Calu3 (cell line): ENCODE measurements at regions of chr5 and their contacts with region 1.

Region 1: DNA sequence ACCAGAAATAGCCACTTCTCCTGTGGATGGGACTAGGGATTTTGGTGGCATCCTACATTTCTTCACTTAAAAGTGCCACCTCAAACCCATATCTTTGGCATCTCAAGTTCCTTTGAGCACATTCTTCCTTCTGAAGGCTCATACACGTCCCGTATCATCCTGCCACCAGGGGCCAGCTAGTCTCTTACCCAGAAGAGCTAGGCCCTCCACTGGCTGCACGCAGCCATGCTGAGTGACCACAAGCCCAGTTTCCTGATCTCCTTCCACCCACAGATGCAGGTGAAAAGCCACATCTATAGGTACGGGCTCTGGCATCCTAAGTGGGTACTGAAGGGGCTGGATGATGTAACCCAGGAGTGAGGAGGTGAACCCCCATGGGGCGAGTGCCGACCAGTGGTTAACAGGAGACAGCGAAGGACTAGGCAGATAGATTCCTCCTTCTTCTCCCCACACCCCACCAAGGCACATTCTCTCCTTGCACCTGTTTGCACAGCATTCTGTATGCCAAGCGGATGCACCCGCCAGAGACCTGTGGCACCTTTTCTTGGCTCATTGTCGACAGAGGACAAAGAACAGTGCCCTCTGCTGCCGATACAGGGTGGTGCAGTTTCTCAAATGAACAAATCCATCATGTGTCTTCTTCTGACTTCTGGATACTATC is 14.4 kb upstream of the SCGB3A1 start:
- DNase-seq: peak; percentile 73
- H3K4me3 Mint-ChIP-seq: no peak overlapping the region
- H3K27ac Mint-ChIP-seq: no peak overlapping the region
- H3K4me1 Mint-ChIP-seq: peaks cover 7% of the 10 kb centered on the region
- H3K27me3 Mint-ChIP-seq: peaks cover 47% of the 10 kb centered on the region
- CTCF ChIP-seq: peak; percentile 84

Region 2: DNA sequence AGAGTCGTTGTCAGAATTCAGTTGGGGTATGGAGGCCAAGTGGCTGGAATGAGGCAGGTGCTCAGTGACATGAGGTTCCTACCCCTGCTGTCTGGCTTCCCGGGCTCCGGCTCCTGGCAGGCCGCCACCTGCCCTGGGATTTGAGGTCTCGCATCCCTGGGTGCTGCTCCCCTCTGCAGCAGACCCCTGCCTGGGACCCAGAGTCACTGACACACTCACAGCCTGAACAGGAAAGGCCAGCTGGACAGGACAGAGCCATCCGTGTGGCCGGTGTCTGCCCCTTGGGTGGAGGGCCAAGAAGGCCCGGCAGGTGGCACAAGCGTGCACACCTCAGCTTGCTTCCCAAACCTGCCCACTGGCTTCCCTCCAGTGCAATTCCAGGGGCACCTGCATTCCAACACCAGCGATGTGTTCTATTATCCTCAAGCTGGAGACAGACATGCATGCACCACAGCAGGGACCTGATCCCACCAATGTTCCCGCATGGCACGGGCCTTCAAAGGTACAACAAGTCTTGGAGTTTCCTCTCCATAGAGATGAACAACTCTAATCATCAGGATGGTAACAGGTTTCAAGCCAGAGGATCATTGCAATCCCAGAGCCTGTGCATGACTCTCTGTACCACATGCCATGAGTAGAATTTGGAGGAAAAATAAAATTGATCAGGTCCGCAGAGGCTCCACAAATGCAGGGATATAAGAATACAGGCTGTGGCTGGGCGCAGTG is 488.5 kb before region 1 on chr5:
- CTCF ChIA-PET with region 1: no interaction called
- intact Hi-C with region 1: loop called (anchors 5 kb)
- DNase-seq: peak; percentile 81
- H3K4me3 Mint-ChIP-seq: no peak overlapping the region
- H3K27ac Mint-ChIP-seq: no peak overlapping the region
- H3K4me1 Mint-ChIP-seq: no peaks in the 10 kb centered on the region
- H3K27me3 Mint-ChIP-seq: peaks cover 19% of the 10 kb centered on the region
- CTCF ChIP-seq: peak; percentile 88

Region 3: GRCh38 chr5:180532268-180532667 is 73.4 kb before region 1 on chr5:
- CTCF ChIA-PET with region 1: no interaction called
- intact Hi-C with region 1: no loop called
- DNase-seq: no peak
- H3K4me3 Mint-ChIP-seq: no peak overlapping the region
- H3K27ac Mint-ChIP-seq: no peak overlapping the region
- H3K4me1 Mint-ChIP-seq: no peaks in the 10 kb centered on the region
- H3K27me3 Mint-ChIP-seq: no peaks in the 10 kb centered on the region
- CTCF ChIP-seq: no peak